Activated naive CD4-positive, alpha-beta T cell treated with anti-CD3 and anti-CD28 coated beads, Interleukin-2, amount 10 ng/mL, durations not matched to agents 7 days and 5 days (primary cell): ENCODE measurements at regions of chr5 and their contacts with region 1.

Region 1: GRCh38 chr5:75236322-75237316 is at the start of gene ANKRD31:
- DNase-seq: peak; percentile 89
- H3K4me3 Mint-ChIP-seq: peak within 1 kb of the TSS; percentile 85
- H3K27ac Mint-ChIP-seq: peak within 1 kb of the TSS; percentile 85
- H3K4me1 Mint-ChIP-seq: peaks cover 17% of the 10 kb centered on the region
- H3K27me3 Mint-ChIP-seq: peaks cover 3% of the 10 kb centered on the region

Region 2: DNA sequence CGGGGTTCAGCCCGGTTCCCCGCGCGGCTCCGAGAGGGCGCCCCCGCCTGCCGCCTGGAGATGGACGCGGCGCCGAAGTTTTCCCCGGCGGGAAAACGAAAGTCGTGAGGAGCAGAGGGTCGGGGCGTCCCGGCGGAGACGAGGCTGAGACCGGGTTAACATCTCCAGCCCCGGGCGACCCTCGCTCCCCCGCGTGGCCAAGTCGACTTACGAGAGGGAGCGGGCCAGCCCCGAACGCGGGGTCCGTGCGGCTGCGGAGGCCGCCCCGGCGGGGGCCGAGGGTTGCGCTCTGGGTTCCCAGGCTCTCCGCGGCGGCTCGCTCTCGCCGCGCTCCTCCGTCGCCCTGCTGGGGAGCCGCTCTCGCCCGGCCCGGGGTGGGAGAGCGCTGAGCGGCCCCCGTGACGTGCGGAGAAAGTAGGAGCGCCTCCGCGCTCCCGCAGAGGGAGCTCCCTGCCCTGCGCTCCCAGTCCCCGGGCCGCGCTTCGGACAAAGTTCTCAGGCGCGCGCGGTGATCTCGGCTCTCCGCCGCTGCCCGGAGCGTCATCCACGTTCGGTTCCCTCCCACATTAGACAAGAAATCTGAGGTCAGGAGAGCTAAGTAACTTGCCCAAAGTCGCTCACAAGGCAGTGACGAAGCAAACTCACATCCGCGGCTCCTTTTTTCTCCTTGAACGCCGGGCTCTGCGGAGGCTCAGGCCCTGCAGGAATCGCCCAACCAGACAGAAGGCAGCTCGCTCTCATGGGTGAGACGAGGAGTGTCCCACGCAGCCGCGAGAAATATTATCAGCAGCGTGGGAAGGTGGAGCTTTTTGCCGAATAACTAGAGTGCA is 183.1 kb before region 1 on chr5:
- CTCF ChIA-PET with region 1: interaction called, 30 read pairs
- DNase-seq: peak; percentile 71
- H3K4me3 Mint-ChIP-seq: peak overlapping the region; percentile 88
- H3K27ac Mint-ChIP-seq: peak overlapping the region; percentile 92
- H3K4me1 Mint-ChIP-seq: peaks cover 81% of the 10 kb centered on the region
- H3K27me3 Mint-ChIP-seq: peaks cover 10% of the 10 kb centered on the region

Region 3: GRCh38 chr5:75336625-75337339 is 100.2 kb after region 1 on chr5 and contains the start of gene HMGCR:
- CTCF ChIA-PET with region 1: interaction called, 13 read pairs
- DNase-seq: peak; percentile 99
- H3K4me3 Mint-ChIP-seq: no peak within 1 kb of the TSS
- H3K27ac Mint-ChIP-seq: no peak within 1 kb of the TSS
- H3K4me1 Mint-ChIP-seq: peaks cover 32% of the 10 kb centered on the region
- H3K27me3 Mint-ChIP-seq: peaks cover 3% of the 10 kb centered on the region

Region 4: DNA sequence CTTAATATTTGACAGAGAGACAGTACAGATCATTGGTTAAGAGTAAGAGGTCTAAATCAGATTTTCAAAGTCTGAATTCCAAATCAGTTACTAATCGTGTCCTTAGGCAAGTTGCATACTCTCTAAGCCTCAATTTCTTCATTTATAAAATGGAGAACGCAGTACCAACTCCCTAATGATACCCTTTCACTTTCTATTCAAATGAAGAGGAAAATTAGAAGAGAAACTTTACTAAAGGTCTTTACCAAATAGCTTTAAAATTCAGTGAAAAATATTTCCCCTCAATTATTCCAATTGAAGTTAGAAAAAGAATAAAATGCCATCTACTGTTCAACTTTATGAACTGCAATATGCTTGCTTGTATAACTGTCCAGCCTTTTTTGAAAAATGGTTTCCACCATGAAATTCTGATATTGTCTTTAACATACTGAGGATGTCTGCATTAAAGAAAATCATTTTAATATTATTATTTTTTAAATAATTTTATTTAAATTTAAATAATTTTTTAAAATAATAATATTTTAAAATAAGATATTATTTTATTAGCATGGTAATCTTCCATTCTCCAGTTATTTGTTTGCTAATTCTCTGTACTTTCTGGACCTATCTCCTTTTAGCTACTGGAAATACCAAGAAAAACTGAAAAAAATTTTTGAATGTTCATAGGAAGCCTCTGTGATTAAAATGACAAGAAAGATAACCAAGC is 444.7 kb after region 1 on chr5:
- CTCF ChIA-PET with region 1: interaction called, 10 read pairs
- DNase-seq: no peak
- H3K4me3 Mint-ChIP-seq: no peak overlapping the region
- H3K27ac Mint-ChIP-seq: no peak overlapping the region
- H3K4me1 Mint-ChIP-seq: peaks cover 11% of the 10 kb centered on the region
- H3K27me3 Mint-ChIP-seq: no peaks in the 10 kb centered on the region